ENCODE measurements at regions of chrX and their contacts with region 1.

Region 1: GRCh38 chrX:55187281-55187680 is 32.9 kb upstream of the PAGE5 start:
- DNase-seq: no peak
- H3K4me3 ChIP-seq: no peak overlapping the region
- H3K27ac ChIP-seq: no peak overlapping the region
- H3K4me1 ChIP-seq: no peaks in the 10 kb centered on the region
- H3K27me3 ChIP-seq: no peaks in the 10 kb centered on the region
- CTCF ChIP-seq: no peak
- EP300 ChIP-seq: no peak
- POLR2A ChIP-seq: no peak

Region 2: DNA sequence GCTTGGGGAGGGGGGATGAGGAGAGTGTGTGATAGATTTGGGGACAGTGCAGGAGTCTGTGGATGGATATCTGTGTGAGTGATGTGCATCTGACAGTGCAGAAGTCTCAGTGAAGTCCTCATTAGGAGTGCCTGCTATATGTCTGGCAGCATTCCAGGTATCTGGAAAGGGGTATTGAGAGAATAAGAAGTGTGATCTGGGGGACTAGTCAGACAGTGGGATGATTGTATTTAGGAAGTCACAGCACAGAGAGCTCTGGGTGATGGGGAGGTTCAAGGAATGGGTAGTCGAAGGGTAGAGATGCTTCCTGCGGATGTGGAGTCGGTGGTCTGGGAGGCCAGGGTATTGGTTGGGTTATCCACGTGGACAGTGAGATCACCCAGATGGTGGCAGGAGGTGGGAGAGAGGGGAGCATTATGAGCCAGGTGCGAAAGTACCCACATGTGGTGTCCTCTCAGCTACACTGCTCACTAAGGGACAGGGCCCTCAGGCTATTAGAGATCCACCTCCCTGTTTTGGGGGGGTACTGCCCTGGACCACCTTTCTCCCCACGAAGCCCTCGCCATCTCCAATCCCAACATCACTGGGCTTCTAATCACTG is 370.0 kb before region 1 on chrX:
- intact Hi-C with region 1: no loop called
- DNase-seq: no peak
- H3K4me3 ChIP-seq: no peak overlapping the region
- H3K27ac ChIP-seq: no peak overlapping the region
- H3K4me1 ChIP-seq: no peaks in the 10 kb centered on the region
- H3K27me3 ChIP-seq: no peaks in the 10 kb centered on the region
- CTCF ChIP-seq: no peak
- EP300 ChIP-seq: no peak
- POLR2A ChIP-seq: no peak

Region 3: GRCh38 chrX:55907968-55908607 is 720.8 kb after region 1 on chrX:
- intact Hi-C with region 1: loop called in 1 of 4 experiments (anchors 5 kb)
- DNase-seq: peak; percentile 46 to 74 (median 51)
- H3K4me3 ChIP-seq: peak overlapping the region; percentile 49
- H3K27ac ChIP-seq: peak overlapping the region; percentile 6 to 46
- H3K4me1 ChIP-seq: peaks cover 2% of the 10 kb centered on the region
- H3K27me3 ChIP-seq: no peaks in the 10 kb centered on the region
- CTCF ChIP-seq: peak; percentile 15 to 22 (median 17)
- EP300 ChIP-seq: no peak
- POLR2A ChIP-seq: no peak